ENCODE measurements at regions of chr4 and their contacts with region 1.

Region 1: DNA sequence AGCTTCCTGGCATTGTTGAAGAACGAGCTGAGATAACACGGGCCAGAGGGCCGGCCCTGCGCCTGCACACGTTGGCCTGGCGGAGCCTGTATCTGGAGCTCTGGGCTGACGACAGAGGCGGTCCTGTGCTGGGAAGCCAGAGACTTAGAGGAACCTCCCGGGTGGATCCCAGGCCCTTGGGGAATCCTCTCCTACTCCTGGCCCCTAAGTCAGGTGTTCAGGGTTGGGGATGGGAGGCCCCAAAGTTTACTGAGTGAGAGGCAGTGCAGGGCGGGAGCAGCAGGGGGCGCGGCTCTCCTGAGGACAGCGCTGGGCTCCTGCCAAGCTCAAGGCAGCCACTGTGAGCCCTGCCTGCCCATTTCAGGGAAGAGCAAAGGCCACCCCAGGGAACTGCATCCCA is 2.5 kb upstream of the HTRA3 start:
- DNase-seq: peak; percentile 54 to 83
- H3K4me3 ChIP-seq: no peak overlapping the region
- H3K27ac ChIP-seq: no peak overlapping the region
- H3K4me1 ChIP-seq: peaks cover 0 to 7% (median 4%) of the 10 kb centered on the region in 4 experiments; a peak in 6 of 7 replicates
- H3K27me3 ChIP-seq: peaks cover 7 to 28% (median 20%) of the 10 kb centered on the region in 4 experiments; a peak in 6 of 7 replicates
- CTCF ChIP-seq: peak in 2 of 3 experiments; percentile 72 to 73; a peak in 3 of 4 replicates
- EP300 ChIP-seq: no peak
- POLR2A ChIP-seq: no peak
- RAD21 ChIP-seq: peak; percentile 84

Region 2: DNA sequence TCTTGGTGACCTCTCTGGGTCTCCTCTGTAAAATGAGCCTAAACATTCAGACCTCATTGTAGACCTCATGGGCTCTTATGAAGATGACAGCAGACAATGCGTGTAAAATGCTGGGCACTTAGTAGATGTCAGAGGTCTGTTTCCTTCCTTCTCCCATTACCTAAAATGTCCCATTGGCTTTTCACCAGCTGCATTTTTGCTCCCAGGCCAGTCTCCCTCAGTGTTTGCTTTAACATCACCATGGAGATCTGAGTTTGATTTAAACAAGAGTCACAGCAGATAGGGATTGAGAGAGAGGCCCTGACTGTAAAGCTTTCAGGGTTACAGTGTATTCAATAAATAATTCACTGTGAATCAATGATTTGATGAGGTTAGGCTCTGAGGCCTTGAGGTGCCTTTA is 856.6 kb before region 1 on chr4:
- CTCF ChIA-PET with region 1: no interaction called
- POLR2A ChIA-PET with region 1: no interaction called
- DNase-seq: peak in 1 of 2 experiments; percentile 1
- H3K4me3 ChIP-seq: no peak overlapping the region
- H3K27ac ChIP-seq: no peak overlapping the region
- H3K4me1 ChIP-seq: peaks cover 2 to 12% (median 9%) of the 10 kb centered on the region in 4 experiments; a peak in 4 of 7 replicates
- H3K27me3 ChIP-seq: peaks cover 26 to 47% (median 39%) of the 10 kb centered on the region in 4 experiments
- CTCF ChIP-seq: no peak
- EP300 ChIP-seq: no peak
- POLR2A ChIP-seq: no peak
- RAD21 ChIP-seq: no peak

Region 3: DNA sequence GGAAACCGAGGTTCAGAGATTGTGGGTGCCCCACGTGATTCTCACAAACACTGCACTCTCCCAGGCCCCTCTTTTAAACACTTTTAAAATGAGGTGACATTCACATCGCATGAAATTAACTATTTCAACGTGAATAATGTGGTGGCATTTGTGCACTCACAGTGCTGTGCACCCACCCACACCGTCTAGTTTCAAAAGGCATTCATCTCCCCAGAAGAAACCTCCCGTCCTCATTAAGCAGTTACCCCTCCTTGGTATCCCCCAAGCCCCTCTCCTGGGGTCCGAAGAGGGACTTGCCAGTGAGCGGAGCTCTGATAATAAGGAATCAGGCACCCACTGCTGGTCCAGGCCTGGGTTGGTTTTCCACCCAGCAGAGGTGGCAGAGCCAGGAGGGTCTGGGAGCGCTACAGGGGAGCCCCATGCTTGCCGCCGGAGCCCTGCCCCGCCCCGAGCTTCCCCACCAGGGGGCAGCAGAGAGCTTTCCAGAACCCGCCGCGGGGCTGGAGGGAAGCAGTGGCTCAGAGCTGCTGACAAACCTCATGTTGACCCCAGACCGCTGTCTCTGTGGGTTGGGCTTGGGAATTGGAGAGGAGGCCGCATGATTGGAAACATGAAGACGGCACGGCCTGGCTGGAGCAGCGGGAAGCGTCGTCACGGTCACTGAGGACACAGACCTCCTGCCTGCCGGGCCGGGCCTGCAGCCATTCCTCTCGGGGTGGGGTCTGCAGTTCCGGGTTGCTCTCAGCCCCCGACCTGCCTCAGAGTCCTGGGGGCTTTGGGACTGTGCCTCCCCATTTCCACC is 25.0 kb before region 1 on chr4:
- CTCF ChIA-PET with region 1: interaction called, 15 read pairs
- POLR2A ChIA-PET with region 1: no interaction called
- DNase-seq: peak; percentile 76 to 100
- H3K4me3 ChIP-seq: no peak overlapping the region
- H3K27ac ChIP-seq: no peak overlapping the region
- H3K4me1 ChIP-seq: peaks cover 0 to 8% (median 3%) of the 10 kb centered on the region in 4 experiments; a peak in 6 of 7 replicates
- H3K27me3 ChIP-seq: no peaks in the 10 kb centered on the region
- CTCF ChIP-seq: peak in 2 of 3 experiments; percentile 87 to 97; a peak in 3 of 4 replicates
- EP300 ChIP-seq: no peak
- POLR2A ChIP-seq: no peak
- RAD21 ChIP-seq: peak; percentile 94 to 96

Region 4: DNA sequence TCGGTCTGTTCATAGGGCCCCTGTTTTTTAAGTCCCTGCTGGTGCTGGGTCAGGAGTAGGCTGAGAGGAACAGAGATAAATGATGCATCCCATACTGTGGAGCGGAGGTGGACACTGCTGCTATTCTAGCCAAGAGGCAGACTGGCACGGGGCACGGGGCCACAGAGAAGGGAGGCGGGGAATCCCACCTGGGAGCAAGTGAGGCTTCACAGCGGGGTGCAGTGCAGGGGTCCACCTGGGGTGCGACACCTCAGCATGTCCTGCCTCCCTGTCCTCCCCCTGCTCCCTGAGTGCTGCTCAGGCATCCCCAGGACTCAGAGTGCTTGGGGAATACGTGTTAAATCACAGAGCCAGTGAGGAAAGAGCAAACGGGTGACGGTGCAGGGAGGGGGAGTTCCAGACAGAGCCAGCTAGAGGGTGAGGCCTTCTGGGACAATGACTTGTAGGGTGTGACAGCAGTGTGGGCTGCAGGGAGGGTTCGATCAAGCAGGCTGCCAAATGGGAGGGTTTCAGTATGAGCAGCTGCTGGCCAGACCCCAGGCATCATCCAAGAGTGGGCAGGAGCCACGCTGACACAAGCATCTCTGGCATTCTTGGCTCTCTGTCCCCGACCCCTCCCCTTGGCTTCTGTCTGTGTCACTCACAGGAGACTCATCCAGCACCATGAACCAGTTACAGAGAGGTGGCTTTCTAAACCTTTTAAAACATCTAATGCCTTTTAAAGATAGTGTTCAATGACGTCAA is 11.2 kb before region 1 on chr4:
- CTCF ChIA-PET with region 1: interaction called, 13 read pairs
- POLR2A ChIA-PET with region 1: no interaction called
- DNase-seq: no peak
- H3K4me3 ChIP-seq: no peak overlapping the region
- H3K27ac ChIP-seq: no peak overlapping the region
- H3K4me1 ChIP-seq: peaks cover 0 to under 1% (median 0%) of the 10 kb centered on the region in 4 experiments; a peak in 1 of 7 replicates
- H3K27me3 ChIP-seq: no peaks in the 10 kb centered on the region
- CTCF ChIP-seq: no peak
- EP300 ChIP-seq: no peak
- POLR2A ChIP-seq: no peak
- RAD21 ChIP-seq: no peak

Region 5: GRCh38 chr4:8289956-8290700 is 23.1 kb after region 1 on chr4:
- CTCF ChIA-PET with region 1: interaction called, 13 read pairs
- POLR2A ChIA-PET with region 1: no interaction called
- DNase-seq: no peak
- H3K4me3 ChIP-seq: no peak overlapping the region
- H3K27ac ChIP-seq: no peak overlapping the region
- H3K4me1 ChIP-seq: no peaks in the 10 kb centered on the region
- H3K27me3 ChIP-seq: no peaks in the 10 kb centered on the region
- CTCF ChIP-seq: no peak
- EP300 ChIP-seq: no peak
- POLR2A ChIP-seq: no peak
- RAD21 ChIP-seq: no peak

Region 6: DNA sequence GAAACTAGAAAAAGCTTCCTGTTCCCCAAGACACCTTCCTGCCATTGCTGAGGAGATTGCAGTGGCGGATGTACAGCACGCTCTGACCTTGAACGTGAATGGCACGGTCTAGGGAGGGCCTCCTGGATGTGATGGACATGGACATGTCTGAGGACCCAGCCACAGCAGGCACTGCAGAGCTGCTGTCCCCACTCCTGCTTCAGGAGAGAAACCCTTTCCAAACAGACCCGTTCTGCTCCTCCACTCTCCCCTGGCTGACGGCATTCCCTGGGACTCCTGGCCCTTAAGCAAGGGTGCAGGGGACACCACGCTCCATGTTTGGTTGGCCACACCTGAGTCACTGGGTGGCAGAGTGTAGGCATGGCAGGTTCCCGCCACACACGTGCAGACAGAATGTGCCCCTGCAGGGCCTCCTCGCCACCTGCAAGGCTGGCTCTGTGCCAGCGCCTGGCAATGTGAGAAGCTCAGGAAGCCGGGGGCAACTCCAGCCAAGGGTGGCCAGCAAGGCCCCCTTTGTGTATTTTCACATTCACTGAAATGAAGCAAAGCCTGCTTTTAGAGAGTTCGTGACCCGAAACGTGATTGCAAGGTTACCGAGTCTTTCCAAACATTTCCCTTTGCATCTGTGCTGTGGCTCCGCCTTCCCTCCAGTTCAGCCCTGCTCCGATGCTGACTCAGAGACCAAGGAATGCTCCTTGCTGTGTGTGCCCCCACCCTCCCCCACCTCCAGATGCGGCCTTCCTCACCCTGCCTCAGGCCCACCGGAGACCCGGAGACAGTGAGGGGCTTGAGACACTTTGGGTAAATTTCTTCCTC is 48.6 kb after region 1 on chr4:
- CTCF ChIA-PET with region 1: interaction called, 16 read pairs
- POLR2A ChIA-PET with region 1: no interaction called
- DNase-seq: peak in 1 of 2 experiments; percentile 58
- H3K4me3 ChIP-seq: no peak overlapping the region
- H3K27ac ChIP-seq: no peak overlapping the region
- H3K4me1 ChIP-seq: peaks cover 0 to 17% (median 12%) of the 10 kb centered on the region in 4 experiments; a peak in 6 of 7 replicates
- H3K27me3 ChIP-seq: no peaks in the 10 kb centered on the region; a peak in 2 of 7 replicates
- CTCF ChIP-seq: no peak
- EP300 ChIP-seq: no peak
- POLR2A ChIP-seq: no peak
- RAD21 ChIP-seq: no peak

Region 7: GRCh38 chr4:8403173-8403753 is 136.2 kb after region 1 on chr4:
- CTCF ChIA-PET with region 1: interaction called, 74 read pairs
- POLR2A ChIA-PET with region 1: no interaction called
- DNase-seq: peak; percentile 33 to 93
- H3K4me3 ChIP-seq: no peak overlapping the region
- H3K27ac ChIP-seq: no peak overlapping the region
- H3K4me1 ChIP-seq: no peaks in the 10 kb centered on the region; a peak in 1 of 7 replicates
- H3K27me3 ChIP-seq: no peaks in the 10 kb centered on the region
- CTCF ChIP-seq: peak in 2 of 3 experiments; percentile 87 to 93; a peak in 3 of 4 replicates
- EP300 ChIP-seq: no peak
- POLR2A ChIP-seq: no peak
- RAD21 ChIP-seq: peak; percentile 94 to 97

Region 8: GRCh38 chr4:8428293-8429097 is 161.4 kb after region 1 on chr4:
- CTCF ChIA-PET with region 1: interaction called, 14 read pairs
- POLR2A ChIA-PET with region 1: no interaction called
- DNase-seq: peak; percentile 51 to 100
- H3K4me3 ChIP-seq: peak overlapping the region; percentile 41 to 71 (median 57)
- H3K27ac ChIP-seq: no peak overlapping the region
- H3K4me1 ChIP-seq: peaks cover 0 to 4% (median 0%) of the 10 kb centered on the region in 4 experiments; a peak in 3 of 7 replicates
- H3K27me3 ChIP-seq: peaks cover 0 to 2% (median 0%) of the 10 kb centered on the region in 4 experiments; a peak in 2 of 7 replicates
- CTCF ChIP-seq: peak in 1 of 3 experiments; percentile 44; a peak in 1 of 4 replicates
- EP300 ChIP-seq: peak in 1 of 2 experiments; percentile 44; a peak in 1 of 3 replicates
- POLR2A ChIP-seq: peak in 1 of 2 experiments; percentile 69; a peak in 2 of 3 replicates
- RAD21 ChIP-seq: peak in 1 of 2 experiments; percentile 14; a peak in 2 of 4 replicates

Region 9: GRCh38 chr4:8832113-8832915 is 565.2 kb after region 1 on chr4:
- CTCF ChIA-PET with region 1: no interaction called
- POLR2A ChIA-PET with region 1: no interaction called
- DNase-seq: peak in 1 of 2 experiments; percentile 44
- H3K4me3 ChIP-seq: no peak overlapping the region
- H3K27ac ChIP-seq: no peak overlapping the region
- H3K4me1 ChIP-seq: peaks cover 0 to 6% (median 3%) of the 10 kb centered on the region in 4 experiments; a peak in 4 of 7 replicates
- H3K27me3 ChIP-seq: no peaks in the 10 kb centered on the region
- CTCF ChIP-seq: no peak
- EP300 ChIP-seq: no peak
- POLR2A ChIP-seq: no peak
- RAD21 ChIP-seq: no peak